Calu3 (cell line): ENCODE measurements at regions of chr4 and their contacts with region 1.

Region 1: GRCh38 chr4:163404580-163404979 is 60.9 kb downstream of the NPY5R start:
- DNase-seq: peak; percentile 33
- H3K4me3 Mint-ChIP-seq: peak overlapping the region; percentile 46
- H3K27ac Mint-ChIP-seq: peak overlapping the region; percentile 87
- H3K4me1 Mint-ChIP-seq: no peaks in the 10 kb centered on the region
- H3K27me3 Mint-ChIP-seq: no peaks in the 10 kb centered on the region
- CTCF ChIP-seq: no peak

Region 2: GRCh38 chr4:163344147-163345125 is 60.1 kb before region 1 on chr4:
- CTCF ChIA-PET with region 1: no interaction called
- intact Hi-C with region 1: loop called (anchors 10 kb)
- DNase-seq: peak; percentile 17
- H3K4me3 Mint-ChIP-seq: peak overlapping the region; percentile 74
- H3K27ac Mint-ChIP-seq: no peak overlapping the region
- H3K4me1 Mint-ChIP-seq: peaks cover 8% of the 10 kb centered on the region
- H3K27me3 Mint-ChIP-seq: no peaks in the 10 kb centered on the region
- CTCF ChIP-seq: no peak